BJ (cell line): ENCODE measurements at regions of chr13 and their contacts with region 1.

Region 1: GRCh38 chr13:106619688-106620555 is 52.0 kb upstream of the ARGLU1 start:
- DNase-seq: no peak
- H3K4me3 ChIP-seq: no peak overlapping the region
- H3K27me3 ChIP-seq: peaks cover 5% of the 10 kb centered on the region
- CTCF ChIP-seq: peak; percentile 86

Region 2: DNA sequence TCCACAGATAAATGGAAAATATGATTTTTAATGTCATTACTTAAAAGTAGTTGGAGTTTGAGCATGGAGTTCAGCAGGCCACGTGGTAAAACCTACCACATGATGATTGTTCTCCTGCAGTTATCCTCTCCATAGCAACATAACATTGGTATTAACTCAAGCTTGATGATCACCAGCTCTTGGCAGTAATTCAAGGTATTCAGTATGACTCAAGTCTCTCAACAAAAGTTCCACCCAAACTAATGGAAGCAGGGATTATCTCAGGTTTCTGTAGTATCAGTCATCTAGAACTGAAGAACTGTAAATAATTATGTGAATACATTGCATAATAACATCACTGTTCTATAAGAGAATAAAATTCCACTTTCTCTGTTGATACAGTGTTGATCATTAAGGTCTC is 1177.0 kb before region 1 on chr13:
- CTCF ChIA-PET with region 1: no interaction called
- POLR2A ChIA-PET with region 1: interaction called, 13 read pairs
- DNase-seq: peak; percentile 87
- H3K4me3 ChIP-seq: no peak overlapping the region
- H3K27me3 ChIP-seq: no peaks in the 10 kb centered on the region
- CTCF ChIP-seq: no peak

Region 3: DNA sequence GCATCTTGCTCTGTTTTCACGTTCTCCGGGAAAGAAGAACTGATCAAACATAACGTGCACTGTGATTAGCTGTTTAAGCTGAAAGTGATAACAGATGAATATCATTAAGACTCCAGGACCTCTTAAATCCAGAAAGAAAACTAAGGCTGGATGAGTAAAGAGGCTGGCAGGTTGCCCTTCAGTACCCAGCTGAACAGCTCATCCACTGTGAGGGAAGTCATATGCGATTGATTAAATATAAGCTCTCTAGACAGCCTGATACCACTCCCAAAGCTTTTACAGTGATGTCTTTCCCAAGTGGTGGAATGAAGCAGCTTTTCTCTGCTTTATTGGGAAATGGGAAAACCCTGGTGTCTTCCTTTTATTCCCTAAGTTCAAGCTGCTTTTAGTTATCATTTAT is 201.4 kb before region 1 on chr13:
- CTCF ChIA-PET with region 1: no interaction called
- POLR2A ChIA-PET with region 1: no interaction called
- DNase-seq: peak; percentile 77
- H3K4me3 ChIP-seq: no peak overlapping the region
- H3K27me3 ChIP-seq: peaks cover 2% of the 10 kb centered on the region
- CTCF ChIP-seq: no peak

Region 4: DNA sequence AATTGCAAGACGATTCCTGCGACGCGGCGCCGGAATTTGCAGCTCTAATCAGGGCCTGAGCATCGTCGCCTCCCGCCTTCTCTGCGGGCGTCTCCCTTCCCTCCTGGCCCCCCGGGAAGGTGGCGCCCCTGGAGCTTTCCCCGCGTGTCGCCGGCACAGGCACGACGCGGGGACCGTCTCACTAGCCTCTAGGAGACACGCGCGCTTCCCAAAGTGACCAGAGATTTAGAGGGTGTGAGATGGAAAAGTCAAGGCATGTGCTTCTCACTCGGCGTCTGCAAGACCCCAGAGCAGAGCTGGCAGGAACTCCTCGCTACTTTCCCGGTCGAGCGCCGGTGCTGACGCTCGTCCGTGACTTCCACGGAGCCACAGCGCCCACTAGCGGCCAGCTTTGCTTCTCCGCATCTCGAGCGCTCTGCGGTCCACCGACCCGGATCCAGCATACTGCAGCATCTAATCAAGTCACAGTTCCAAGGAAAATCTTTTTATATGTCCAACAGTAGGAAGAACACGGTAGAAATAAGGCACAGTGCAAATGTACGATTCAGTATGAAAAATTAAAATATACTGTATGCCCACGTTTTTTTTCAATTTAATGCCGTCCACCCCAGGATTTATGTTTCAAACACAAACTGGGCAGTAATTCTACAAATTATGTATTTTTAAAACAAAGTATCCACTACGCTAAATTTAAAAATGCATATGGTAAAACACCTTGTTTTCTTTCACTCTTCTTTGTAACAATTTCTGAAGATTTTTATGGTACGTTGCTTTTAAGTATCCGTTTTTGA is 83.5 kb before region 1 on chr13:
- CTCF ChIA-PET with region 1: interaction called, 25 read pairs
- POLR2A ChIA-PET with region 1: interaction called, 9 read pairs
- DNase-seq: no peak
- H3K4me3 ChIP-seq: peak overlapping the region; percentile 45
- H3K27me3 ChIP-seq: no peaks in the 10 kb centered on the region
- CTCF ChIP-seq: peak; percentile 97

Region 5: GRCh38 chr13:106567474-106568298 is 52.2 kb before region 1 on chr13 and contains the start of gene ARGLU1:
- CTCF ChIA-PET with region 1: interaction called, 10 read pairs
- POLR2A ChIA-PET with region 1: no interaction called
- DNase-seq: peak; percentile 52
- H3K4me3 ChIP-seq: peak within 1 kb of the TSS; percentile 95
- H3K27me3 ChIP-seq: no peaks in the 10 kb centered on the region
- CTCF ChIP-seq: no peak
- polyA plus RNA-seq, gene ARGLU1: 25.6 and 46.3 TPM in 2 replicates

Region 6: GRCh38 chr13:106850973-106851650 is 231.2 kb after region 1 on chr13:
- CTCF ChIA-PET with region 1: no interaction called
- POLR2A ChIA-PET with region 1: no interaction called
- DNase-seq: no peak
- H3K4me3 ChIP-seq: no peak overlapping the region
- H3K27me3 ChIP-seq: no peaks in the 10 kb centered on the region
- CTCF ChIP-seq: no peak

Region 7: GRCh38 chr13:107138486-107138885 is 518.6 kb after region 1 on chr13:
- CTCF ChIA-PET with region 1: no interaction called
- POLR2A ChIA-PET with region 1: no interaction called
- DNase-seq: no peak
- H3K4me3 ChIP-seq: no peak overlapping the region
- H3K27me3 ChIP-seq: no peaks in the 10 kb centered on the region
- CTCF ChIP-seq: no peak